Activated naive CD4-positive, alpha-beta T cell treated with anti-CD3 and anti-CD28 coated beads for 36 hours (primary cell): ENCODE measurements at regions of chr19 and their contacts with region 1.

Region 1: DNA sequence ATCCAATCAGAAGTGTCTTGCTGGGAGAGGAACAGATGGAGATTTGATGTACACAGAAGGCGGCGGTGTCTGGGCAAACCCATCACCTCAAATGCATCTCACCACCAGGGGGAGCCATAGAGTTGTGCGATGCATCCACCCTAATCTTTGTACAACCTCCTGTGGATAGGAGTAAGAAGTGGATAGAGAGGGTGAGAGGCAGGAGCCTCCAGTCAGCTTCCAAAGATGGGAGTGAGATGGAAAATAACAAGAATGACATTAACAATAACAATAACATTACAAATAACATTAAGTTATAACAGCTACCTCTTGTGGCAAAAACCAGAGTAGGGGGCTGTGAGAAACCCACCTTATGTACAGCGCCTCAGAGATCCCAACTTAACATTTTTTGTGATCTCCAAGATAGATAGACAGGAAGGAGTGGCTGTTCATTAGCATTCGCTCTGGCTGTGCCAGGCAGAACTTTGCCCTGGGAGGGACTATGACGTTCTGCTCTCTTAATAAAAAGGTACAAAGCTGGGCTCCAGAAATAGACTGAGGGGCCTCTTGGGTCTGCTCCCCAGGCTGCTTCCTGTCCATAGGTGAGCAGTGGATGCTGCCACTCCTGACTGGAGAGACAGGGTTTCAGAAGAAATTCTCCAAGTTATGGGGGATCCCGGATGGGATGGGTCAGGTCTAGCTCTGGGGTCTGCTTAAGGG is 5.2 kb upstream of the CEACAM18 start:
- DNase-seq: peak; percentile 93
- H3K4me3 Mint-ChIP-seq: no peak overlapping the region
- H3K27ac Mint-ChIP-seq: no peak overlapping the region
- H3K4me1 Mint-ChIP-seq: peaks cover 4% of the 10 kb centered on the region
- H3K27me3 Mint-ChIP-seq: peaks cover 8% of the 10 kb centered on the region

Region 2: GRCh38 chr19:51194527-51195317 is 278.4 kb before region 1 on chr19:
- CTCF ChIA-PET with region 1: no interaction called
- intact Hi-C with region 1: no loop called
- DNase-seq: no peak
- H3K4me3 Mint-ChIP-seq: no peak overlapping the region
- H3K27ac Mint-ChIP-seq: no peak overlapping the region
- H3K4me1 Mint-ChIP-seq: no peaks in the 10 kb centered on the region
- H3K27me3 Mint-ChIP-seq: no peaks in the 10 kb centered on the region

Region 3: GRCh38 chr19:51462276-51462675 is 10.9 kb before region 1 on chr19:
- CTCF ChIA-PET with region 1: interaction called, 12 read pairs
- intact Hi-C with region 1: no loop called
- DNase-seq: no peak
- H3K4me3 Mint-ChIP-seq: no peak overlapping the region
- H3K27ac Mint-ChIP-seq: no peak overlapping the region
- H3K4me1 Mint-ChIP-seq: peaks cover 3% of the 10 kb centered on the region
- H3K27me3 Mint-ChIP-seq: peaks cover 41% of the 10 kb centered on the region

Region 4: DNA sequence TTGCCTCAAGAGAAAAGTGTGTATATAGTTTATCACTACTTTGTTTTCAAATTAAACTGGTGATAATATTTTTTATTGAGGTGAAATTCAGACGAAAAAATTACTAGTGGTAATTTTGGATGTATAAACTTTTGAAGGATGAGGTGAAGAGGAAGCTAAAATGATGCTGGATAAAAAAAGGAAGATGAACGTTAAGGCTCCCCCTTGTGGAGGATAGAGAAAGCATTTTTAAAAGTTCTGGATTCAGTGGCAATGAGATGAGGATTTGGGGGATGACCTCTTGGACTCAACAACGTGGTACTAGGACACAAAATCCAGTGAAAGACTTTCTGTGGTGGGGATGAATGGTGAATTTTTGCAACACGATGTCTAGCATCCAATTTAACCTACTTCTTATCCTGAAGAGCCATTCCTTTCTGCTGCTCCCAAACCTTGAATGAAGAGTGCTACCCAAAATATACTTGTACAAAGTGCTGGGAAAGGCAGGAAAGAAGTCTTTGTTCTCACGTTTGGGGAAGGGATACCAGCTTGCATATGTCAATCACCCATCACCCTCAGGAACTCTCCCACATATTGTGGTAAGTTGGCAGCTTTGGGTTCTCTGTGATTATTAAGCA is 164.3 kb after region 1 on chr19:
- CTCF ChIA-PET with region 1: interaction called, 10 read pairs
- intact Hi-C with region 1: loop called (anchors 1 kb)
- DNase-seq: no peak
- H3K4me3 Mint-ChIP-seq: no peak overlapping the region
- H3K27ac Mint-ChIP-seq: no peak overlapping the region
- H3K4me1 Mint-ChIP-seq: no peaks in the 10 kb centered on the region
- H3K27me3 Mint-ChIP-seq: peaks cover 29% of the 10 kb centered on the region

Region 5: GRCh38 chr19:51660975-51661600 is 187.9 kb after region 1 on chr19:
- CTCF ChIA-PET with region 1: interaction called, 43 read pairs
- intact Hi-C with region 1: loop called (anchors 1 kb)
- DNase-seq: peak; percentile 89
- H3K4me3 Mint-ChIP-seq: no peak overlapping the region
- H3K27ac Mint-ChIP-seq: no peak overlapping the region
- H3K4me1 Mint-ChIP-seq: peaks cover 5% of the 10 kb centered on the region
- H3K27me3 Mint-ChIP-seq: peaks cover 19% of the 10 kb centered on the region